ENCODE measurements at regions of chr2 and their contacts with region 1.

Region 1: GRCh38 chr2:130342533-130343275 is at the start of gene IMP4:
- DNase-seq: peak; percentile 98
- H3K4me3 Mint-ChIP-seq: peak within 1 kb of the TSS; percentile 100
- H3K27ac Mint-ChIP-seq: peak within 1 kb of the TSS; percentile 98
- H3K4me1 Mint-ChIP-seq: peaks cover 40% of the 10 kb centered on the region
- H3K27me3 Mint-ChIP-seq: no peaks in the 10 kb centered on the region

Region 2: DNA sequence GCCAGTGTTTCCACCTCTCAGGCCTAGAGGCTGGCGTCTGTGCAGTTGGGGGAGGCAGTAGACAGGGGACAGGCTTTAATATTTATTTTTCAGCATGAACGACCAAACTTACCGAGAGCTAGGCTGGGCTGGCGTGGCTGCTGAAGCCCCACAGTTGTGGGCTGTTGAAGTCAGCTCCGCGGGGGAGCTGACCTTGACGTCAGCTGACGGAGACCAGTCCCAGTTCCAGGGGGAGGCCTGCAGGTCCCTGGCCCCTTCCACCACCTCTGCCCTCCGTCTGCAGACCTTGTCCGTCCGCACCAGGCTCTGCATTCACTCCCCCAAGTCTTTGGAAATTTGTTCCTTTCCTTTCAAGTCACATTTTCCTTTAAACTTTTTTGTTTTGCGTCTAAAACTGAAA is 111.0 kb before region 1 on chr2:
- CTCF ChIA-PET with region 1: no interaction called
- DNase-seq: no peak
- H3K4me3 Mint-ChIP-seq: no peak overlapping the region
- H3K27ac Mint-ChIP-seq: no peak overlapping the region
- H3K4me1 Mint-ChIP-seq: no peaks in the 10 kb centered on the region
- H3K27me3 Mint-ChIP-seq: peaks cover 8% of the 10 kb centered on the region

Region 3: GRCh38 chr2:130288461-130289403 is 54.0 kb before region 1 on chr2:
- CTCF ChIA-PET with region 1: no interaction called
- DNase-seq: no peak
- H3K4me3 Mint-ChIP-seq: no peak overlapping the region
- H3K27ac Mint-ChIP-seq: no peak overlapping the region
- H3K4me1 Mint-ChIP-seq: no peaks in the 10 kb centered on the region
- H3K27me3 Mint-ChIP-seq: peaks cover 21% of the 10 kb centered on the region

Region 4: DNA sequence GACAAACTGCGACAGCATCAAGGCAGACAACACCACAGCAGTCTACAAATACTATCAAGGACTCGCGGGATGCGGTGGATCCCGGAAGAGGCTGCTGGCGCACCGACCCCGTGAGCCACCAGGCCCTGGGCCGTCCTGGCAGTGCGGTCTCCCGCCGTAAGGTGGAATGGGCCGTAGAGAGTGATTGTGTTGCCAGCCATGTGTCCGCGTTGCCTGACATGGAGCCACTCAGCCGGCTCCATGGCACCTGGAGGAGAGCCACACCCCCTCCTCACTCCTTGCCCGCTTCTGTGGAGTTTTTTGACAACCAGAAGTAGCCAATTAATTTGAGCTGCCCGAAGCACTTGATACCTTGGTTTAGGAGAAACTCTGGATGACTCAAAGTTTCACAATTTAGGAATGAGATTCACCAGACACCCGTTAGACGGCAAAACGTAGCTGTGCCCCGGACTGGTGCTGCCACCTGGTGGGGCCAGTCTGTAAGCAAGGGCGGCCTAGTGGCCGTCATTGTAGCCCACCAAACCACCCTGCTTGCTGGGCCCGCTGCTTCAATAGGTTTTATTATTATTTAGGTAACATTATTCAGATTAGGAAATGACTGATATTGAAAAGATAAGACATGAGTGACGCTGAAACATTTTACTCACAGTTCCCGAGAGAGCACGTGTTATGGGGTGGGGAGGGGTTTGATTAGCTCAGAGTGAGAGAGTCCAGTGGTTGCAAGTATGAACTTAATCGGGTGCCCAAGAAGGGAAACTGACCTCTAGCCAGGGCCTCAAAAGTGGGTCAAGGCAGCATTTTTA is 10.2 kb before region 1 on chr2:
- CTCF ChIA-PET with region 1: interaction called, 21 read pairs
- DNase-seq: peak; percentile 76
- H3K4me3 Mint-ChIP-seq: no peak overlapping the region
- H3K27ac Mint-ChIP-seq: no peak overlapping the region
- H3K4me1 Mint-ChIP-seq: peaks cover 7% of the 10 kb centered on the region
- H3K27me3 Mint-ChIP-seq: peaks cover 35% of the 10 kb centered on the region

Region 5: GRCh38 chr2:130372055-130372832 is 29.5 kb after region 1 on chr2:
- CTCF ChIA-PET with region 1: interaction called, 17 read pairs
- DNase-seq: peak; percentile 84
- H3K4me3 Mint-ChIP-seq: peak overlapping the region; percentile 96
- H3K27ac Mint-ChIP-seq: peak overlapping the region; percentile 97
- H3K4me1 Mint-ChIP-seq: peaks cover 71% of the 10 kb centered on the region
- H3K27me3 Mint-ChIP-seq: peaks cover 10% of the 10 kb centered on the region

Measured in activated naive CD4-positive, alpha-beta T cell treated with anti-CD3 and anti-CD28 coated beads, Interleukin-2, amount 10 ng/mL, durations not matched to agents 7 days and 5 days (primary cell).